Activated B cell treated with CpG ODN at 0.5 μM for 24 hours (primary cell): ENCODE measurements at regions of chr6 and their contacts with region 1.

Region 1: DNA sequence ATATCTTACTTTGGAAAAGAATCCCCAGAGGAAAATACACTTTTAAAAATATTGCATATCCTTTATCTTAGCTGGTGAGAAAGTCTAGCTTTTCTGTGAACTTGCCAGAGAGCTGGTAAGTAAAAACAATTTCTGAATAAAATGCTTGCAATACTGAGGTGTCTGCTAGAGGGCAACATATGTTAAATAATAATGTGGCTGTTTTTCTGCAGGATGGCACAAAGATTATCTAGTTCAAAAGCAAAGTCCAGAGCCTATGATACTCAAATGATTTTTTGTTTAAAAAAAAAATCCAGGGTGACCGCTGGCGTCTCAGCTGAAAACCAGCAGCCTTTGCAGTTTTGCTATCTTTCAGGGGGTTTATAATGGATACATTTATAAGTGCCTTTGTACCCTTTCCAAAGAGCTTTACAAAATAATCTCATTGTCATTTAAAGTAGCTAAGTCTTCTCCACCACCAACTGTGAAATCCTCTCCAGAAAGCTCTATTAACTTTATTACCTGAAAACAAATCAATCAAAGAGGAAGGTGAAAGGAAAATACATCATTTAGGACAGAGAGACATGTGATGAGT is 194.9 kb downstream of the PHACTR1 start:
- DNase-seq: no peak
- ATAC-seq: no peak
- H3K4me3 Mint-ChIP-seq: no peak overlapping the region
- H3K27ac Mint-ChIP-seq: no peak overlapping the region
- H3K4me1 Mint-ChIP-seq: peaks cover 5% of the 10 kb centered on the region
- H3K27me3 Mint-ChIP-seq: no peaks in the 10 kb centered on the region
- CTCF ChIP-seq: no peak

Region 2: GRCh38 chr6:13026557-13026956 is 115.1 kb after region 1 on chr6:
- CTCF ChIA-PET with region 1: no interaction called
- POLR2A ChIA-PET with region 1: no interaction called
- intact Hi-C with region 1: no loop called
- DNase-seq: no peak
- ATAC-seq: no peak
- H3K4me3 Mint-ChIP-seq: no peak overlapping the region
- H3K27ac Mint-ChIP-seq: no peak overlapping the region
- H3K4me1 Mint-ChIP-seq: peaks cover 2% of the 10 kb centered on the region
- H3K27me3 Mint-ChIP-seq: peaks cover 21% of the 10 kb centered on the region
- CTCF ChIP-seq: no peak

Region 3: DNA sequence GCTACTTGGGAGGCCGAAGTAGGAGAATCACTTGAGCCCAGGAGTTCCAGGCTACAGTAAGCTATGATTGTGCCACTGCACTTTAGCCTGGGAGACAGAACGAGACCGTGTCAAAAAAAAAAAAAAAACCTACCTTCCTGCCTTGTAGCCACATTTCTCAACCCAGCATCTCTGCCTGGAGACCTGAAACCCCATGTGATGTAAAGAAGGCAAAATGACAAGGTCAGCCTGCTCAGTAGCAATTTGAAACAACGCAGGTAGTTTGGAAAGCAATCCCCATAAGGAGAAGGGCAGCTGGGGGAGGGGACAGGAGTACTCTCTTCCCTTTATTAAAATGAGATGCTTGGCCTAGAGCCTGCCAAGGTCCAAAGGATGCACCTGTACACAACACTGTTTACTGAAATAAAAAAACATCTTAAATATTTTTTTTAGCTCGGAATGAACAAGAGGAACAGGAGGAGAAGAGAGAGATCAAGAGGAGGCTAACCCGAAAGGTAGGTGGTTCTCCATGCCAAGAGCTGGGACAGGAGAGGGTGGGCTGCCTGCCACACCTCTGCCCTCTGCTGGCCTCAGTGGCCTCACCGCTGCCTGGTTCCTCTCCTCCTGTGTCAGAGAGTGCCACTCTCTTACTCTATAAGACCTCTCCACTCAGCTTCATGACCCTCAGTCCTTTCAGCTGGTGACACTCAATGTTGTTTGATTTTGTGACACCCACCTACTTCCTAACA is 366.5 kb after region 1 on chr6:
- CTCF ChIA-PET with region 1: interaction called, 9 read pairs
- POLR2A ChIA-PET with region 1: interaction called, 3 read pairs
- intact Hi-C with region 1: loop called (anchors 1 kb)
- DNase-seq: no peak
- ATAC-seq: peak; percentile 26
- H3K4me3 Mint-ChIP-seq: peak overlapping the region; percentile 58
- H3K27ac Mint-ChIP-seq: peak overlapping the region; percentile 77
- H3K4me1 Mint-ChIP-seq: peaks cover 75% of the 10 kb centered on the region
- H3K27me3 Mint-ChIP-seq: no peaks in the 10 kb centered on the region
- CTCF ChIP-seq: no peak